Testis (tissue), 5 donors: ENCODE measurements at regions of chr12 and their contacts with region 1.

Region 1: GRCh38 chr12:108664338-108665258 is 30.9 kb upstream of the SELPLG start:
- DNase-seq: peak; percentile 90
- H3K4me3 ChIP-seq: no peak overlapping the region
- H3K27ac ChIP-seq: peak overlapping the region; percentile 28 to 66
- H3K4me1 ChIP-seq: peaks cover 19% of the 10 kb centered on the region
- H3K27me3 ChIP-seq: no peaks in the 10 kb centered on the region
- CTCF ChIP-seq: peak; percentile 85 to 95 (median 90)
- POLR2A ChIP-seq: no peak

Region 2: GRCh38 chr12:108803428-108804105 is 139.0 kb after region 1 on chr12:
- intact Hi-C with region 1: loop called (anchors 10 kb)
- DNase-seq: peak; percentile 92
- H3K4me3 ChIP-seq: no peak overlapping the region
- H3K27ac ChIP-seq: peak overlapping the region; percentile 85 to 89
- H3K4me1 ChIP-seq: peaks cover 50% of the 10 kb centered on the region
- H3K27me3 ChIP-seq: no peaks in the 10 kb centered on the region
- CTCF ChIP-seq: peak; percentile 95 to 97 (median 96)
- POLR2A ChIP-seq: no peak

Region 3: DNA sequence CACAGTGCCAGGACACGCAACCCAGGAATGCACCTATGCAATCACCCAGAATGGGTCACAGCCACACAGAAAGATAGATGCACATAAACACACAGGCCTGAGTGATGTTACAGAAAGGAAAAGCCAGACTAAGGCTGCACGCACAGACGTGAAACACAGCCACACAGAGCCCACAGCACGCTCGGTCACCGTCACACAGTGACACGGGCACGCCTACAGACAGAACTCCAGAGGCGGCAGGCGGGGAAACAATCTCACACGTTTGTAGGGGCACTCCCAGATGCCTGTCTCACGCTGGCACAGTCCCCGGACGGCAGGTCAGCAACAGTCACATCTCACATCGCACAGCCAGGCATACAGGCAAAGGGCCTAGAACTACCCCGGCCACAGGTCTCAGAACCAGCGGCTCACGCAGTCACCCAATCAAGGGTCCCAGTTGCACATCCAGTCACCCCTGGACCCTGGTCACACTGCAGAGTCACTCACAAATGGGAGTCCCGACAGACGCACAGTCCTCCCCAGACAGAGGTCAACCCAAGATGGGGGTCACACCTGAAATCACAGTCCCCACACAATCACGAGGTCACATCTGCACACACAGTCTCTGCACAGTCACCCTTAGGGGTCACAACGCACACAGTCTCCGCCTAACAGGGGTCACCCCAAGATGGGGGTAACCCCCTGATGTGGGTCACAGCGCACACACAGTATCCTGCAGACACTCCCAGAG is 192.0 kb after region 1 on chr12:
- intact Hi-C with region 1: loop called (anchors 10 kb)
- DNase-seq: peak; percentile 69
- H3K4me3 ChIP-seq: peak overlapping the region; percentile 71 to 77
- H3K27ac ChIP-seq: peak overlapping the region; percentile 67 to 88
- H3K4me1 ChIP-seq: peaks cover 37% of the 10 kb centered on the region
- H3K27me3 ChIP-seq: no peaks in the 10 kb centered on the region
- CTCF ChIP-seq: no peak
- POLR2A ChIP-seq: no peak